Activated B cell treated with CpG ODN at 0.5 μM for 24 hours (primary cell): ENCODE measurements at regions of chr10 and their contacts with region 1.

Region 1: DNA sequence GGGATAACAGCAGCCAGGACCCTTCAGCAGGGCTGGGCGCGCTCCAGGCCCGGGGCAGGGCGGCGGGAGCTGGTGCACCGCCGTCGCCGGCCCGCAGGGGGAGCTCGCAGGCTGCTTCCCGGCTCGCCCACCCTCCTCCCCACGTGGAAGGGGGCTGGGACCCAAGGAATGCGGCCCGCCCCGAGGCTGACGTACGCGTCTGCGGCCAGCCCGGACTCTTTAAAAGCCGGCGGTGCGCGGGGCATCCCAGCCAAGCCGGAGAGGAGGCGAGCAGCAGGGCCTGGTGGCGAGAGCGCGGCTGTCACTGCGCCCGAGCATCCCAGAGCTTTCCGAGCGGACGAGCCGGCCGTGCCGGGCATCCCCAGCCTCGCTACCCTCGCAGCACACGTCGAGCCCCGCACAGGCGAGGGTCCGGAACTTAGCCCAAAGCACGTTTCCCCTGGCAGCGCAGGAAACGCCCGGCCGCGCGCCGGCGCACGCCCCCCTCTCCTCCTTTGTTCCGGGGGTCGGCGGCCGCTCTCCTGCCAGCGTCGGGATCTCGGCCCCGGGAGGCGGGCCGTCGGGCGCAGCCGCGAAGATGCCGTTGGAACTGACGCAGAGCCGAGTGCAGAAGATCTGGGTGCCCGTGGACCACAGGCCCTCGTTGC is at the start of gene PFKFB3:
- DNase-seq: peak; percentile 96
- ATAC-seq: peak; percentile 72
- H3K4me3 Mint-ChIP-seq: peak within 1 kb of the TSS; percentile 97
- H3K27ac Mint-ChIP-seq: peak within 1 kb of the TSS; percentile 82
- H3K4me1 Mint-ChIP-seq: peaks cover 33% of the 10 kb centered on the region
- H3K27me3 Mint-ChIP-seq: no peaks in the 10 kb centered on the region
- CTCF ChIP-seq: no peak
- total RNA-seq, gene PFKFB3: 96.7 and 105 TPM in 2 replicates

Region 2: DNA sequence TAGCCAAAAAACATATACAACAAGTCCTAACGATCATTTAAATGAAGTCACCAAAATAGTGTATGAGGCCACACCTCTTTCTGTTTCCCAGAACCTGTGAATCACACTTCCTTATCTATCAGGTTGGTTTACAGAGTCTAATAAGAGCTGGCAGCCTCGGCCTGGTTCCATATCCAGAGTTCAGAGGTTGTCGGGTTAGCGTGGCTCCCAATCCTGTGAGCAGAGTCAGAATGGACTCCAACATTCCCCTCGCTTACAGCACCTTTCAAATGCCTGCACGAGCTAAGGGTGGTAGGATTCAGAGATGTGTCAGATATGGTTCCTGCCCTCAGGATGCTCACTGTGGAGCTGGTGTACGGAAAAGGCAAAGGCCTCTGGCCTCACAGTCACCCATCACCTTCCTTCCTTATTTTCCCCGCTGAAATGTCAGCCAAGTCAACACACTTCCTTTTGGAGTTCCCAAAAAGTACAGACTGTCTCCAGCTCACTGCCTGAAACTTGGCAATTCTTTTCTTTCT is 231.4 kb before region 1 on chr10:
- CTCF ChIA-PET with region 1: interaction called, 3 read pairs
- POLR2A ChIA-PET with region 1: interaction called, 12 read pairs
- intact Hi-C with region 1: loop called (anchors 2 kb)
- DNase-seq: no peak
- ATAC-seq: no peak
- H3K4me3 Mint-ChIP-seq: peak overlapping the region; percentile 28
- H3K27ac Mint-ChIP-seq: peak overlapping the region; percentile 73
- H3K4me1 Mint-ChIP-seq: peaks cover 54% of the 10 kb centered on the region
- H3K27me3 Mint-ChIP-seq: no peaks in the 10 kb centered on the region
- CTCF ChIP-seq: no peak

Region 3: GRCh38 chr10:6108603-6109443 is 94.0 kb before region 1 on chr10:
- CTCF ChIA-PET with region 1: interaction called, 10 read pairs
- POLR2A ChIA-PET with region 1: interaction called, 3 read pairs
- intact Hi-C with region 1: loop called (anchors 1 kb)
- DNase-seq: no peak
- ATAC-seq: peak; percentile 84
- H3K4me3 Mint-ChIP-seq: no peak overlapping the region
- H3K27ac Mint-ChIP-seq: peak overlapping the region; percentile 65
- H3K4me1 Mint-ChIP-seq: peaks cover 12% of the 10 kb centered on the region
- H3K27me3 Mint-ChIP-seq: no peaks in the 10 kb centered on the region
- CTCF ChIP-seq: peak; percentile 88

Region 4: DNA sequence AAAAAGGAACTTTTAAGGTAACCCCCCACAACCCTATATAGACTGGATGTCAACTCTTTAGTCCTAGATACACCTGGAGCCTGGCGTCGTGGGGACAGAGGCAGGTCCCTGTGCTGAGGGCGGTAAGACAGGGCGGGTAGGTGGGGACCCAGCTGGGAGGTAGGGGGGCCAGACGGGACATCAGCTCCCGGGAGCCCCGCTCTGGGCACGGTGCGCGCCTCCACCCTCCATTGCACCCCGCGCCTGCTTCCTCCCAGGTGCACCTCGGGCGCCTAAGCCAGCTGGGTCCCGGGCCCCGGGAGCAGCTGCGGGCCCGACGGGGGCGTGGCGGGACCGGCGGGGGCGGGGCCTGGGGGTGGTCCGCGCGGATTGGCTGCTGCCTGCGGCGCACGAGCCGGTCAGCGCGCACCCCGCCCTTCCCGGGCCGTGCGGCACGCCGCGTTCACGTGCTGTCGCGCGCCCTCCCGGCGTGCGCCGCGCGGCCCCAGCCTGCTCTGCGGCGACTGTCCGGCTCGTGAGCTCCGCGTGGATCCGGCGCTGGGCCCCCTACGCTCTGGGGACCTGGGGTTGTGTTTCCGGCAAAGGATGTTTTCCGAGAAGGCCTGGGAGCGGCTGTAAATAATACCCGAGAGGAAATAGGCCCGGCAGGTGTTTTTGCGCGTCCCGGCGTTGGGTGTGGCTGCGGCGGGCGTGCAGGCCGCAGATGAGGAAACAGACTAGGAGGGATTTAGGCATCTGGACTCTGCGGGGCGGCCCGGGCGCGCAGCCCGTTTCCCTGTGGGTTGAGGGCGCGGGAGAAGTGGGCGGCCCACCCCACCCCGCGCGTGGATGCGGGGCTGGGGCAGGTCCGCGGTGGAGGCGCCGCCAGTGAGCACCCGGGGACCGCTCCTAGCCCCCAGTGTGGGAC is 39.2 kb before region 1 on chr10:
- CTCF ChIA-PET with region 1: interaction called, 3 read pairs
- POLR2A ChIA-PET with region 1: interaction called, 34 read pairs
- intact Hi-C with region 1: loop called (anchors 1 kb)
- DNase-seq: peak; percentile 90
- ATAC-seq: peak; percentile 98
- H3K4me3 Mint-ChIP-seq: peak overlapping the region; percentile 96
- H3K27ac Mint-ChIP-seq: peak overlapping the region; percentile 97
- H3K4me1 Mint-ChIP-seq: peaks cover 34% of the 10 kb centered on the region
- H3K27me3 Mint-ChIP-seq: no peaks in the 10 kb centered on the region
- CTCF ChIP-seq: no peak

Region 5: DNA sequence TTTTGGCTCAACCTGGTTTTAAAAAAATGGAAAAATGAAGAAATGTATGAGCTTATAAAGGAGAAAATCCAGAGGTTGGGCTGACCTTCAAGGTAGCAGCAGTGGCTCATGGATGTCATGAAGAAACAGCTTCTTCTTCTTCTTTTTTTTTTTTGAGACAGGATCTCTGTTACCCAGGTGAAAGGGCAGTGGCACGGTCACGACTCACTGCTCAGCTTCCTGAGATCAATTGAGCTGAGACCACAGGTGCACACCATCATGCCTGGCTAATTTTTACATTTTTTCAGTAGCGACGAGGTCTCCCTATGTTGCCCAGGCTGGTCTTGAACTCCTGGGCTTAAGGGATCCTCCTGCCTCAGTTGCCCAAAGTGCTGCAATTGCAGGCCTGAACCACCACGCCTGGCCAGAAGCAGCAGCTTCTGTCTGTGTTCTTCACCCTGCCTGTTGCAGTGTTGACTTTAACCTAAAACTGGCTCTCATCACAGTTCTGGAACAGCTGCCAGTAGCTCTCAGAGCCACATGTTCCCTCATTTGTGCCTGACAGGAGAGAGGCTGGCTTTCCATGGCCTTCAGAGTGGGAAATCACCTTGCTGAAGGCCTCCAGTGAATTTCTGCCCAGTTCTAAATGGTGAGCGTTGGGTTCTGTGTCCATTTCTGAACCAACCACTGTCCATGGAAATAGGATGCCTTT is 117.7 kb after region 1 on chr10:
- CTCF ChIA-PET with region 1: interaction called, 3 read pairs
- POLR2A ChIA-PET with region 1: interaction called, 10 read pairs
- intact Hi-C with region 1: no loop called
- DNase-seq: peak; percentile 24
- ATAC-seq: peak; percentile 92
- H3K4me3 Mint-ChIP-seq: peak overlapping the region; percentile 57
- H3K27ac Mint-ChIP-seq: no peak overlapping the region
- H3K4me1 Mint-ChIP-seq: peaks cover 23% of the 10 kb centered on the region
- H3K27me3 Mint-ChIP-seq: no peaks in the 10 kb centered on the region
- CTCF ChIP-seq: no peak

Region 6: DNA sequence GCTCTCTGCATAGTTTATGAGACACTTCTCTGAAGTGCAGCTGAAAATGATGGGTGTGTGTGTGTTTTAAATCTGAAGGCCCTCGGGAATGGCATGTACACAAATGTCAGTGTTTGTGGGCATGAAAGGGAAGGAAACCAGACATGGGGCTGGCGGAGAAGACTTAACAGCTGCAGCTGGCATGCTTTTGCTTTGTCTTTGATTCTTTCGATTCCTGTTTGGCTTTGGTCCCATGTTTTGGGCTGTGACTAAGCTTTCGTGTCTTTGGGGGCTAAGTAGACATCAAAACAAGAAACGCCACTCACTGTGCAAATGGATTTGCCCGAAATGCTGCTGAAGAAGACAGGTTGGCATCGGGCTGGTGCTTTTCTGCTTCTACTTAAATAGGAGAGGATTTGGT is 179.3 kb after region 1 on chr10:
- CTCF ChIA-PET with region 1: interaction called, 14 read pairs
- POLR2A ChIA-PET with region 1: interaction called, 29 read pairs
- intact Hi-C with region 1: no loop called
- DNase-seq: no peak
- ATAC-seq: peak; percentile 90
- H3K4me3 Mint-ChIP-seq: peak overlapping the region; percentile 72
- H3K27ac Mint-ChIP-seq: peak overlapping the region; percentile 82
- H3K4me1 Mint-ChIP-seq: peaks cover 25% of the 10 kb centered on the region
- H3K27me3 Mint-ChIP-seq: no peaks in the 10 kb centered on the region
- CTCF ChIP-seq: no peak